ENCODE measurements at regions of chr18 and their contacts with region 1.

Region 1: GRCh38 chr18:12989397-12990122 is 1.6 kb upstream of the CEP192 start:
- DNase-seq: no peak
- H3K4me3 ChIP-seq: no peak overlapping the region
- H3K27ac ChIP-seq: no peak overlapping the region
- H3K4me1 ChIP-seq: peaks cover 21% of the 10 kb centered on the region
- H3K27me3 ChIP-seq: no peaks in the 10 kb centered on the region
- CTCF ChIP-seq: no peak
- POLR2A ChIP-seq: no peak

Region 2: DNA sequence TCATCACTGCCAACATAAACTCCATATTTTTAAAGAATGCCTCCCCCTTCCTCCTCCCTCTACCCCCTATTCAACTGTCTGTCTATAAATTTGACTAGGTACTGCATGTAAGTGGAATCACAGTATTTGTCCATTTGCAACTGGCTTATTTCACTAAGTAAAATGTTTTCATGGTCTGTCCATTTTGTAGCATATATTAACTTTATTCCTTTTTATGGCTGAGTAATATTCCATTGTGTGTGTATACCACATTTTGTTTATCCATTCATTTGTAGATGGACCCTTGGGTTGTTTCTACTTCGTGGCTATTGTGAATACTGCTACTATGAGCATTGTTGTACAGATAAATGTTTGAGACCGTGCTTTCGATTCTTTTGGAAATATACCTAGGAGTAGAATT is 31.1 kb before region 1 on chr18:
- intact Hi-C with region 1: loop called (anchors 1 kb)
- DNase-seq: no peak
- H3K4me3 ChIP-seq: no peak overlapping the region
- H3K27ac ChIP-seq: no peak overlapping the region
- H3K4me1 ChIP-seq: peaks cover 12% of the 10 kb centered on the region
- H3K27me3 ChIP-seq: no peaks in the 10 kb centered on the region
- CTCF ChIP-seq: no peak
- POLR2A ChIP-seq: no peak

Region 3: DNA sequence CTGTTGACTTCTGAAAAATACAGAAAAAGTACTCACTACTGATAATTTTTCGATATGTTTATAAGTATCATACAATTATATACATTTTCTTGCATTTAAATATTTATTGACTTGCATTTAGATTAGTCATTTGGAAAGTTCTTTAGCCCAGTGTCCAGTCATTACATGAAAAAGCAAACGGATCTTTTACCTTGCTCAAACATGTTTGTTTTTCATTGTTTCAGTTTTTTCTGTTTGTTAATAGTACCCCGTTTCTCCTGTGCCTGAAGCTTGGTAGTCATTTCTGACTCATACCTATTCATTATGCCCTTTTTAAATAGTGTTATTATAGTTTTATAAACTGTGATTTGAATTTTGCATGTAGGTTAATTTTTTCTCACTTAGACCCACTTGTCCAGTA is 29.7 kb after region 1 on chr18:
- intact Hi-C with region 1: no loop called
- DNase-seq: no peak
- H3K4me3 ChIP-seq: no peak overlapping the region
- H3K27ac ChIP-seq: no peak overlapping the region
- H3K4me1 ChIP-seq: no peaks in the 10 kb centered on the region
- H3K27me3 ChIP-seq: no peaks in the 10 kb centered on the region
- CTCF ChIP-seq: no peak
- POLR2A ChIP-seq: no peak